Activated CD4-positive, alpha-beta memory T cell treated with anti-CD3 and anti-CD28 coated beads for 36 hours (primary cell): ENCODE measurements at regions of chr12 and their contacts with region 1.

Region 1: DNA sequence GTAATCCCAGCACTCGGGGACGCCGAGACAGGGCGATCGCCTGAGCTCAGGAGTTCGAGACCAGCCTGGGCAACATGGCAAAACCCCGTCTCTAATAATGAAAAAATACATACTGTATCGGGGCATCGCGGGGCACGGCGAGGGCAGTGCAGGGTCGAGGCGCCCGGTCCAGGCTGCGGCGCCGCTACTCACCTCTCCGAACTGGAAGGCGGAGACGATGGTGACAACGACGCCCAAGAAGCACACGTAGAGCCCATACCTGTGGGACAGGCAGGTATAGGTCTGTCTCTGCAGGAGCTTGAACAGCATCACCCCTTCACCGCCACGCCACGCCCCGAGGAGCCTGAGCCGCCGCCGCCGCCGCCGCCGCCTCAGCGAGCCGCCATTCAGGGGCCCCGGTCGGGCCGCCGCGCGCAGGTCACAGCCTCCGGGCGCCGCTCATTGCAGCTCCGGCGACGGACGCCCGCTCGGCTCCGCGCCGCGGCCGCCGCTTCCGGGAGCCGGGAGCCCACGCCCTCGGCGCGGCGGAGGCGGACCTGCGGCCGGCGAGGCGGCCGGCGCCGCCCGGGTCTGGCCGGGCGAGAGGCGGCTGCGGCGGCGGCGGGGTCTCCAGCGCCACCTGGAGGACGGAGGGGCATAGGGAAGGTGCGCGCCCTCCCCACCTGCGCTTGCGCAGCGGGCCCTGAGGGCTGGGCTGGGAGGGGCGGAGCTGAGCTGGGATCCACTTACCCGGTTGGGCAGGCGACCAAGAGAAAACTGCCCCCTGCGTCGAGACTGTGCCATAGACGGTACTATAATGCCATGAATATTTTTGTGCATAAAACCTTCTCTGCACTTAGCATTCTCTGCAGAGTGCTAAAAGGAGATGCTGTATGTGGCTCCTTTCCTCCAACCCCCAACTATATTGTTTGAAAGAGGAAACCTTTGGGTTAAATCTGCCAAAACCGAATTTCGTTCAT is at the start of gene GNPTAB:
- DNase-seq: peak; percentile 97
- H3K4me3 Mint-ChIP-seq: peak within 1 kb of the TSS; percentile 96
- H3K27ac Mint-ChIP-seq: peak within 1 kb of the TSS; percentile 81
- H3K4me1 Mint-ChIP-seq: peaks cover 36% of the 10 kb centered on the region
- H3K27me3 Mint-ChIP-seq: no peaks in the 10 kb centered on the region
- total RNA-seq, gene GNPTAB: 19.6 to 20.2 TPM

Region 2: GRCh38 chr12:101407436-101408345 is 423.0 kb before region 1 on chr12 and contains the start of gene ARL1:
- CTCF ChIA-PET with region 1: interaction called, 4 read pairs
- POLR2A ChIA-PET with region 1: interaction called, 5 read pairs
- intact Hi-C with region 1: loop called (anchors 2 kb)
- DNase-seq: peak; percentile 86
- H3K4me3 Mint-ChIP-seq: peak within 1 kb of the TSS; percentile 99
- H3K27ac Mint-ChIP-seq: peak within 1 kb of the TSS; percentile 94
- H3K4me1 Mint-ChIP-seq: peaks cover 22% of the 10 kb centered on the region
- H3K27me3 Mint-ChIP-seq: no peaks in the 10 kb centered on the region
- total RNA-seq, gene ARL1: 63.2 to 64.1 TPM

Region 3: DNA sequence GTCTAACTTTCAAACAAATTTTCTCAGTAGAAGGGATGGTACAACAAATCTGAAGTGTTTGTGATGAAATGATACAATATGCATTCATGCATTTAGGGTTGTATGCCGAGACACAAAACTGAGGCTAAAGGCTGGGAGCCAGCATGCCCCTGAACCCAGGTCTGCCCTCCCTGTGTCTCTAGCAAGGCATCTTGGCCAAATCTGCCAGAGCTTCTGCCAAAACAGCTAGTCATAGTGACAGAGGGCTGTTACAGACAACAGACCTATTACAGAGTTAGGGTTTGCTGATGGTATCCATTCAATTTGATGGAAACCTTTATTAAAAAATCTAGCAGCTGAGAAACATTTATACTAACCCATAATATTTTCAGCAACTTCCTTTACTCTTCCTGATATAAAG is 144.5 kb before region 1 on chr12:
- CTCF ChIA-PET with region 1: no interaction called
- POLR2A ChIA-PET with region 1: no interaction called
- intact Hi-C with region 1: no loop called
- DNase-seq: no peak
- H3K4me3 Mint-ChIP-seq: no peak overlapping the region
- H3K27ac Mint-ChIP-seq: no peak overlapping the region
- H3K4me1 Mint-ChIP-seq: no peaks in the 10 kb centered on the region
- H3K27me3 Mint-ChIP-seq: peaks cover 4% of the 10 kb centered on the region

Region 4: GRCh38 chr12:101697197-101697929 is 133.3 kb before region 1 on chr12 and contains the start of gene CHPT1:
- CTCF ChIA-PET with region 1: interaction called, 8 read pairs
- POLR2A ChIA-PET with region 1: no interaction called
- intact Hi-C with region 1: loop called (anchors 2 kb)
- DNase-seq: peak; percentile 74
- H3K4me3 Mint-ChIP-seq: peak within 1 kb of the TSS; percentile 88
- H3K27ac Mint-ChIP-seq: peak within 1 kb of the TSS; percentile 61
- H3K4me1 Mint-ChIP-seq: peaks cover 39% of the 10 kb centered on the region
- H3K27me3 Mint-ChIP-seq: no peaks in the 10 kb centered on the region
- total RNA-seq, gene CHPT1: 20.6 to 23.0 TPM

Region 5: DNA sequence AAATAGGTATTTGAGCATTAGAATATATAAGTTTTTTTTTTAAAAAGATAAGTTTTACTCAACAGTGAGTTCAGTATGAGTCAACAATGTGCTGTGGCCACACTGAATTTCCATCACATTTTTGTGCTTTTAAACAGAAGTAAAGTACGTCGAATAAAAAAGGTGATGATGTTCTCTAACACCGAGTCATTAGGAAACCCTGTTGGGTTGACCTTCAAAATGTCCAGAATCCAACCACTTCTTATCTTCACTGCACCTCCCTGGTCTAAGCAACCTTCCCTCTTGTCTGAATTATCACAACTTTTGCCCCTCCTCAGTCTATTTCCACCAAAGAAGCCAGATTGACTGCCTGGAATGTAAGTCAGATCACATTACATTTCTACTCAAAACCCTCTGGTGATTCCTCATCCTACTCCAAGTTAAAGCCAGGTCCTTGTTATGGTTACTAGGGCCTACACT is 48.3 kb before region 1 on chr12:
- CTCF ChIA-PET with region 1: interaction called, 42 read pairs
- POLR2A ChIA-PET with region 1: interaction called, 5 read pairs
- intact Hi-C with region 1: loop called (anchors 2 kb)
- DNase-seq: peak; percentile 22
- H3K4me3 Mint-ChIP-seq: no peak overlapping the region
- H3K27ac Mint-ChIP-seq: peak overlapping the region; percentile 18
- H3K4me1 Mint-ChIP-seq: peaks cover 22% of the 10 kb centered on the region
- H3K27me3 Mint-ChIP-seq: no peaks in the 10 kb centered on the region

Region 6: DNA sequence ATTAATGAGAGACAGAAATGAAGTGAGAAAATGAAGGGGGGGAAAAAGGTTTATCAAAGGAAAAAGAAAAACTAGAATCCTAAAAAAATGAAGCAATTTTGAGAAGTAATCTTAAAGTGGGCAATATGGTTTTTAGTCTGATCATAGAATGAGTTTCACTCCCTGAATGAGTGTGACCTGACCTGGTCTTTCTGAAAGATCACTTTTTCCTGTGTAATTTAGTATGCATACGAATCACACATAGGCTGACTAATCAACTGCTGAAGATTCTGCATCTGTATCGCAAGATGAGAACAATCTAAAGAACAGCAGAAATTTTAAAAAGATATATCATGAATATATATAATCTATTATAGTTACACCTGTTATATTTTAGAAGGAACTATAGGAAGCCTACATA is 11.2 kb before region 1 on chr12:
- CTCF ChIA-PET with region 1: interaction called, 26 read pairs
- POLR2A ChIA-PET with region 1: interaction called, 3 read pairs
- intact Hi-C with region 1: no loop called
- DNase-seq: no peak
- H3K4me3 Mint-ChIP-seq: no peak overlapping the region
- H3K27ac Mint-ChIP-seq: peak overlapping the region; percentile 82
- H3K4me1 Mint-ChIP-seq: peaks cover 44% of the 10 kb centered on the region
- H3K27me3 Mint-ChIP-seq: no peaks in the 10 kb centered on the region

Region 7: GRCh38 chr12:102023343-102023930 is 192.8 kb after region 1 on chr12:
- CTCF ChIA-PET with region 1: no interaction called
- POLR2A ChIA-PET with region 1: no interaction called
- intact Hi-C with region 1: no loop called
- DNase-seq: no peak
- H3K4me3 Mint-ChIP-seq: no peak overlapping the region
- H3K27ac Mint-ChIP-seq: no peak overlapping the region
- H3K4me1 Mint-ChIP-seq: no peaks in the 10 kb centered on the region
- H3K27me3 Mint-ChIP-seq: no peaks in the 10 kb centered on the region